Heart right ventricle (tissue), 16 donors: ENCODE measurements at regions of chr1 and their contacts with region 1.

Region 1: DNA sequence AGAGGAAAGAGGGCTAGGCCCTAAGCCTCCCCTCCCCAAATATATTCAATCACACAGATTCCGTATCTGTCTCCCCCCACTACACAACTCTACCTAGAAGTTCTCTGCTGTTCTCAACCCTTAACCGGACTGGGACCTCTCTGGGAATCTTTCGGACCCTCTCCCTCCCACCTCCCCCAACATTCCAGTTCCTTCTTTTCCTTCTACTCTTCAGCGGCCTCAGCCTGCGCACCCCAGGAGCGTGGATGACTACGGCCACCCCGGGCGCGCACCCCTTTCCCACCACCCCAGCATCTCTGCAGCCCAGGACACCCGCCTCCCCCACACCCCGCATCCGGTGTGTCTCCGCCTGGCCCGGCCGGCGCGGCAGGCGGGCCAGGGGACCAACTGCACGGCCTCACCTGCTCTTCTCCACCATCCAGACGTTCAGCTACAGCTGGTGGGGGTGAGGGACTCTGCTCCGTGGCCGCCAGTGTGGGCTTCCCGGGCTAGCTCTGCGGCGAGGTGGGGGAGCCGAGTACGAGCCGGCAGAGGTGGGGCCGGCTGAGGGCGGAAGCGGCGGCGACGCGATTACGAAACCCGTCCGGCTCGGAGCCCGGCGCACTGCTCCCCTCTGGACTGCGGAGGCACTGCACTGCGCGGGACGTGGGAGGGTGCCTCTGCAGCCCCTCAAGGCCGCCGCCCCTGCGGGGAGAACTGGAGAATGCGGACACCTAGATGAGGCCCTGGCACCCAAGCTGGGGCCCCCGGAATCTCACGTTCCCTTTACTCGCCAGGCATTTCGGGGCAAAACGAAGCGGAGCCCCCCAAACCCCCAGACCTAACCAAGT is at the start of gene CDC42SE1:
- DNase-seq: peak; percentile 84 to 87
- ATAC-seq: peak; percentile 93 to 96 (median 94)
- H3K4me3 ChIP-seq: peak within 1 kb of the TSS; percentile 47 to 93 (median 79)
- H3K27ac ChIP-seq: peak within 1 kb of the TSS; percentile 80 to 100 (median 97)
- H3K4me1 ChIP-seq: peaks cover 16 to 67% (median 39%) of the 10 kb centered on the region in 9 donors
- H3K27me3 ChIP-seq: no peaks in the 10 kb centered on the region
- CTCF ChIP-seq: peak; percentile 63 to 95 (median 89)
- total RNA-seq, gene CDC42SE1: 26.1 to 45.6 (median 30.5) TPM

Region 2: GRCh38 chr1:150890033-150890416 is 169.3 kb before region 1 on chr1:
- intact Hi-C with region 1: no loop called
- DNase-seq: no peak
- ATAC-seq: no peak
- H3K4me3 ChIP-seq: no peak overlapping the region
- H3K27ac ChIP-seq: no peak overlapping the region
- H3K4me1 ChIP-seq: no peaks in the 10 kb centered on the region
- H3K27me3 ChIP-seq: no peaks in the 10 kb centered on the region
- CTCF ChIP-seq: no peak

Region 3: GRCh38 chr1:150994268-150994667 is 65.0 kb before region 1 on chr1:
- intact Hi-C with region 1: no loop called
- DNase-seq: no peak
- ATAC-seq: no peak
- H3K4me3 ChIP-seq: no peak overlapping the region
- H3K27ac ChIP-seq: no peak overlapping the region
- H3K4me1 ChIP-seq: peaks cover 0 to 21% (median 12%) of the 10 kb centered on the region in 9 donors
- H3K27me3 ChIP-seq: no peaks in the 10 kb centered on the region
- CTCF ChIP-seq: no peak

Region 4: DNA sequence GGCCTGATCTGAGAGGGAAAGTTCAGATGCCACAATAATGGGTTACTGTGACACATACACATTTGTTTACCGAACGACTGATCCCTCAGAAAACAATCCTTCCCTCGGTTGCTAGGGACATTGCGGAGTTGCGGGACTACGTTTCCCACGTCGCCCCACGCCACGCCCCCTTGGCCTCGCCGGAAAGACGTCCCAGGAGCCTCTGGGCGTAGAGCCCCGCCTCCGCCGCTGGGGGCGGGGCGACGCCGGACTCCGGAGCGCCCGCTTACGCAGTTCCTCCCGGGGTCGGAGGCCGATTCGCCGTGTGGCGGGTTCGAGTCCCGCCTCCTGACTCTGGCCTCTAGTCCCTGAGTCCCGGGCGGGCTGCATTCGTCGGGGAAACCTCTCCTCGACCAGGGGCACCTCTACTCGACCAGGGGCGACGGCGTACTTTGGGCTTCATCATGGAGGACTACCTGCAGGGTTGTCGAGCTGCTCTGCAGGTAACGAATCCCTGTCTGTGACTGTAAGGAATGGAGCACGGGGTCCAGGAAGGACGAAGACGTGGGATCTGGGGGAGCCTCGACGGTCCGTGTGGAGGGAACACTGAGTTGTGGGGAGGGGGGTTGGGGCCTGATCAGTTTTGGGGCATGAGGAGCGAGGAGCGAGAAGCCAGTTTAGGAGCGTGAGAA is 51.0 kb before region 1 on chr1 and contains the start of gene PRUNE1:
- intact Hi-C with region 1: loop called in 2 of 10 experiments (anchors 5 to 10 kb)
- DNase-seq: peak; percentile 97 to 98
- ATAC-seq: peak; percentile 91 to 95 (median 93)
- H3K4me3 ChIP-seq: peak within 1 kb of the TSS; percentile 47 to 85 (median 76)
- H3K27ac ChIP-seq: peak within 1 kb of the TSS; percentile 52 to 96 (median 92)
- H3K4me1 ChIP-seq: peaks cover 10 to 90% (median 81%) of the 10 kb centered on the region in 9 donors
- H3K27me3 ChIP-seq: no peaks in the 10 kb centered on the region
- CTCF ChIP-seq: peak in 2 of 9 donors; percentile 9 to 25
- total RNA-seq, gene PRUNE1: 37.5 to 50.1 (median 46.0) TPM

Region 5: GRCh38 chr1:151085953-151086559 is 26.8 kb after region 1 on chr1:
- intact Hi-C with region 1: no loop called
- DNase-seq: no peak
- ATAC-seq: no peak
- H3K4me3 ChIP-seq: no peak overlapping the region
- H3K27ac ChIP-seq: no peak overlapping the region
- H3K4me1 ChIP-seq: no peaks in the 10 kb centered on the region
- H3K27me3 ChIP-seq: no peaks in the 10 kb centered on the region
- CTCF ChIP-seq: no peak

Region 6: GRCh38 chr1:151113877-151114276 is 54.6 kb after region 1 on chr1:
- intact Hi-C with region 1: no loop called
- DNase-seq: no peak
- ATAC-seq: no peak
- H3K4me3 ChIP-seq: no peak overlapping the region
- H3K27ac ChIP-seq: no peak overlapping the region
- H3K4me1 ChIP-seq: no peaks in the 10 kb centered on the region
- H3K27me3 ChIP-seq: no peaks in the 10 kb centered on the region
- CTCF ChIP-seq: no peak